Left lung (tissue), 14 donors: ENCODE measurements at regions of chr11 and their contacts with region 1.

Region 1: DNA sequence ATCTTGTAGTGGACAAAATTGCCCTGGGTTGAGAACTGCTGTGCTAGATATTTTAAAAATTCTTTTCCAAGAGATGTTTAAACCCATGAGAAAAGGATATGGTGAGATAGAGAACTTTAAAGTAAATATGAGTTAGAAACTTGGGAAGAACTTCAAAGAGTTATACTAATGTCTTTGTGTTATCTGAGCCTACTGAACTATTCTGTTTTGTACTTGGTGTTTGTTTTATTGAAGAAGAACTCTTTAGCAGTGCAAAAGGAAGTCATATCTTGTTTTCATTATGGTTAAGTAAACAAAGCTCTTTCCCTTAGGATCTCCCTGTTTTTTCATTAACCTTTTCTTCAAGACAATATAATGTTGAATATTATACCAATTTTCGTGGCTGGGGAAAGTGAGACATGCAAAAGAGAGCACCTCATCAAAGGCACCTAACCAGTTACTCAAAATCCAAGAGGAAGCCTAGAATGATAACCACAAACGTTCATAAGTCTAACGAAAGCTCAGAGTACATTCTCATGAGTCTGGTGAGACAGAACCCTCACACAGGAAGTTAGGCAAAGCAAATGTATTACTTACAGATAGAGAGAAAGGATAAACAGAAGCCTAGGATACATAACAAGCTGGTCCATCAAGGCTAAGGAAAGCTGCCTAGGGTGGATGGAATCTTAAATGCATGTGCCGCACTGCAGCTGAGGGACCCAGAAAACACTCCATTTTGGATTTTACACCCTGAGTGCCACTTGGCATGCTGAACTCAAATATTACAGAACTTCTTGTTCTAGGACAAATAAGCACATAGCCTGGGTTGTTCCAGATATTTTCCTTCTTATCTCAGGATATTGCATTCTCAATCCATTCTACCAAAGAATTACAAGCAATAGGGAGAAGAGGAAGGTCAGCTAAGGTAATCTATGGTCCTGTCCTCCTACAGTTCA is 112.5 kb upstream of the ANO3 start:
- DNase-seq: no peak
- ATAC-seq: peak; percentile 67
- H3K4me3 ChIP-seq: no peak overlapping the region
- H3K27ac ChIP-seq: no peak overlapping the region
- H3K4me1 ChIP-seq: no peaks in the 10 kb centered on the region
- H3K27me3 ChIP-seq: no peaks in the 10 kb centered on the region
- CTCF ChIP-seq: no peak

Region 2: GRCh38 chr11:25988178-25988577 is 231.3 kb before region 1 on chr11:
- intact Hi-C with region 1: loop called in 1 of 2 experiments (anchors 5 kb)
- DNase-seq: no peak
- ATAC-seq: no peak
- H3K4me3 ChIP-seq: no peak overlapping the region
- H3K27ac ChIP-seq: no peak overlapping the region
- H3K4me1 ChIP-seq: no peaks in the 10 kb centered on the region
- H3K27me3 ChIP-seq: no peaks in the 10 kb centered on the region
- CTCF ChIP-seq: no peak

Region 3: DNA sequence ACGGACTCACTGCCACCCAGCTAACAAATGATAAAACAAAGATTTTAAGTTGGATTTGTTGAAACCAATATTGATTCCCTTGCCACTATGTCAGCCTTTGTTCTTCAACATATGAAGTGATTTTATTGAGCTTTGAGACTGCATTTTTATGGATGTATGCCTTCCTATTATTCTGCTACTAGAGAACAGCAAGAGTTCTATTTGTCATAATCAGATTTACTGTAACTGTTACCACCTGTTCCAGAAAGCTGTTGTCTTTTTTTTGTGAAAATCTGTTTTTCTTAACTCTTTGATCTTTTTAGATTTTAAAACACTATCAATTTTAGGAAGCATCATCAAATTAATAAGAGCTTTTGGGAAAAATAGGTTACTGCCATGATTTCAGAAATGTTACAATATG is 238.2 kb after region 1 on chr11:
- intact Hi-C with region 1: no loop called
- DNase-seq: no peak
- ATAC-seq: no peak
- H3K4me3 ChIP-seq: no peak overlapping the region
- H3K27ac ChIP-seq: no peak overlapping the region
- H3K4me1 ChIP-seq: no peaks in the 10 kb centered on the region
- H3K27me3 ChIP-seq: no peaks in the 10 kb centered on the region
- CTCF ChIP-seq: no peak